Vagina (tissue), 2 donors: ENCODE measurements at regions of chr3 and their contacts with region 1.

Region 1: DNA sequence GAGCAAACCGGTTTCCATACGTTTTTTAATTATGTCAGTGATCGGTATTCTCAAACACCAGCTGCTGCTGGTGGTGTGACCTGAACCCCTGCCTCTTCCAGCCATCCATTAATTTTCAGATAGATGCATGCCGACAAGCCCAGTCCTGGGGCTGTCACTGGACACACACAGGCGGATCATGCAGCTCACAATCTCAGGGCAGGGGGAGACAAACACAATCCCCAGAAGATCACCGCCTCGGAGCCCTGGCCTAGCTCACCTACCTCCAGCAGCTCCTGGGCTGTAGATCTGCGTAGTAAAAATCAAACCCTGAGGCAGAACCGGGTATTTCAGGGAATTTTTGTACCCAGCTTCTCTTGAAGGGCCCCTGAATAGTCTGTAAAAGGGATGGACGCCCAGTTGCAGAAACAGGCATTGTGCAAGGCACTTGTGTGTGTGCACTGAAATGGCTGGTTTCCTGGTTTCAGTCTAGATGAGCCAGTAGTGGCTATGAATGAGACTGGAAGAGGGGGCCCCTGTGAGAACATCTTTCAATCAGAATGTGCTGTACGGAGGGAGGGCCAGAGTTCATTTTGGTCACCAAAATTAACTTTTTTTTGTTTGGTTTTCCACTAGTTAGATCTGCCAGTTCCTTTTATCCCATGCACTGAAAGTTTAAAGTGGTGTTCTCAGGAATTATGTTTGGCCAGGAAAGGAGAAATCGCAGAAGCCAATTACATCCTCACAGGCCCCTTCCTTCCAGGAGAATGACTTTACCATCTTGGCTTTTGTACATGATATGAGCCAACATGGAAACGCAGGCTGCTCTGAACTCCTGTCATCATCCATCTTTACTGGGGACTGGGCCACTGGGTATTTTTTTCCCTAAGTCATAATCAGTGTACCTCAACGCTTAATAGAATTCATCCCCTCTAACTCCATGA is 55.0 kb upstream of the RPL32 start:
- DNase-seq: no peak
- H3K4me3 ChIP-seq: no peak overlapping the region
- H3K27ac ChIP-seq: no peak overlapping the region
- H3K4me1 ChIP-seq: peaks cover 19% of the 10 kb centered on the region
- H3K27me3 ChIP-seq: no peaks in the 10 kb centered on the region
- CTCF ChIP-seq: peak in 1 of 3 experiments; percentile 11
- POLR2A ChIP-seq: no peak

Region 2: GRCh38 chr3:12859840-12860239 is 36.5 kb before region 1 on chr3:
- intact Hi-C with region 1: loop called (anchors 5 kb)
- DNase-seq: no peak
- H3K4me3 ChIP-seq: no peak overlapping the region
- H3K27ac ChIP-seq: no peak overlapping the region
- H3K4me1 ChIP-seq: no peaks in the 10 kb centered on the region
- H3K27me3 ChIP-seq: no peaks in the 10 kb centered on the region
- CTCF ChIP-seq: no peak
- POLR2A ChIP-seq: no peak

Region 3: DNA sequence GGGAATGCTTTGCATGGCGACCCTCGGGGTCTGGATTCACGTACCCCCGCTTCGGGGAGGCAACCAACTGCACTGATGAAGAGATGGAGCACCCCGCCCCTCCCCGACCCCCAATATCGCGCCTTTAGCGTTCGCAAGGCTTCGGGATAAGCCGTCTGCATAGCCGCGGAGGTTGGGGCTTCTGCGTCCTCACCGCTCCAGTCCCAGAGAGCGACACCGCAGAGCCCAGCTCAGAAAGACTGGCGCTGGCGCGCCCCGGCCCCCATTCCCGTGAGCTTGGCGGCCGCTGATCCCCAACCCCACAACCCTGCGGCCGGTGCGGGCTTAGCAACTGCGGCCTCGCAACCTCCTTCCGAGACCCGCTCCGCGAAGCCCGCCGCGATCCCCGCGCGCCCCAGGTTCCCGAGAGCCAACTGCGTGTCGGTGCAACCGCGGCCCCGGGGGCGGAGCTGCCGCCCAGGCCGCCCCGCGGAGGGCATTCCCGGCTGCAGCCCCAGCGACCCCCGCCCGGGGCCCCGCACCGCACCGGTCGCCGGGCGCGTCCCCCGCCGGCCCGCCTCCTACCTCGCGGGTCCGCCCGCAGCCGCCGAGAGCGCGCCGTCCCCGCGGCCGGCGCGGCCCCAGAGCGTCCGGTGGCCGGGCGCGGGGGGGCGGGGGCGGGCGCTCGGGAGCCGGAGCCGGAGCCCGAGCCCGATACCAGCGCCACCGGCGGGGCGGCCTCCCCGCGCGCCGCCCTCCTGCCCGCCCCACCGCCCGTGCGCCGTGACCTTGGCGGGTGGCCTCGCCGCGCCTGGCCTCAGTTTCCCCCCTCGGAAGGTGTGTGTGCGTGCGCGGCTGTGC is 97.4 kb after region 1 on chr3:
- intact Hi-C with region 1: loop called (anchors 1 kb)
- DNase-seq: no peak
- H3K4me3 ChIP-seq: peak overlapping the region; percentile 71 to 88
- H3K27ac ChIP-seq: peak overlapping the region; percentile 84
- H3K4me1 ChIP-seq: peaks cover 21% of the 10 kb centered on the region
- H3K27me3 ChIP-seq: no peaks in the 10 kb centered on the region
- CTCF ChIP-seq: no peak
- POLR2A ChIP-seq: no peak